Naive thymus-derived CD4-positive, alpha-beta T cell (primary cell): ENCODE measurements at regions of chr19 and their contacts with region 1.

Region 1: DNA sequence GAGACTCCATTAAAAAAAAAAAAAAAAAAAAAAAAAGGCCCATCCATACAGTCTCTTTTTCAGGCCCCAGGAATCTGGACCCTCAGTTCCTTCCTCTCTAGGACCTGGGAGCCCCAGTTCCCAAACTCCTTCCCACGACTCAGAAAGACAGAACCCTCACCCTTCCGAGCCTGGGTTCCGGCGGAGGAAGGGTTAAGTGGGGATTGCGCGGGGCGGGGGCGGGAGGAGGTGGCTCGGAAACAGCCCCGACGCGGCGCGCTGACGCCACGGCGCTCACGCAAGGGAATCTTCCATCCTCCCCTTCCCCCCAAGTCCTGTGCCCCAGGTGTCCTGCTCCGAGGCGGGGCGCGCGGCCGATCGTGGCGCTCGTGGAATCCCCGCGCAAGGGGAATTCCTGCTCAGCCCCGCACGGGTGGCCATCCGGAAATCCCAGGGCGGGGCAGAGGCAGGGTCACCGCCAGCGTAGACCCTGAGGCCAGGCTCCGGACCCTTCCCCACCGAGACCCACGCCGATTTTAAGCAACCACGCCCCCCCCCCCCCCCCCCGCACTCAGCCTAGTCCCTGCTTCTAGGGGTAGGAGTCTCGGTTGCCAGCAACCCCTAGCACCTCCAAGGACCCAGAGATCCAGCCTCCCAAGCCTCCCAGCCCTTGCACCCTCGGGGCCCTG is 659 bp downstream of the NFKBID start:
- DNase-seq: peak; percentile 74 to 94 (median 87)
- ATAC-seq: peak; percentile 74
- H3K4me3 ChIP-seq: peak overlapping the region; percentile 94
- H3K4me3 Mint-ChIP-seq: peak overlapping the region; percentile 83 to 100 (median 95)
- H3K27ac ChIP-seq: peak overlapping the region; percentile 100
- H3K27ac Mint-ChIP-seq: peak overlapping the region; percentile 92 to 97 (median 96)
- H3K4me1 ChIP-seq: peaks cover 35 to 43% of the 10 kb centered on the region in 2 donors
- H3K4me1 Mint-ChIP-seq: peaks cover 34 to 65% (median 46%) of the 10 kb centered on the region in 7 donors
- H3K27me3 ChIP-seq: no peaks in the 10 kb centered on the region
- H3K27me3 Mint-ChIP-seq: no peaks in the 10 kb centered on the region

Region 2: DNA sequence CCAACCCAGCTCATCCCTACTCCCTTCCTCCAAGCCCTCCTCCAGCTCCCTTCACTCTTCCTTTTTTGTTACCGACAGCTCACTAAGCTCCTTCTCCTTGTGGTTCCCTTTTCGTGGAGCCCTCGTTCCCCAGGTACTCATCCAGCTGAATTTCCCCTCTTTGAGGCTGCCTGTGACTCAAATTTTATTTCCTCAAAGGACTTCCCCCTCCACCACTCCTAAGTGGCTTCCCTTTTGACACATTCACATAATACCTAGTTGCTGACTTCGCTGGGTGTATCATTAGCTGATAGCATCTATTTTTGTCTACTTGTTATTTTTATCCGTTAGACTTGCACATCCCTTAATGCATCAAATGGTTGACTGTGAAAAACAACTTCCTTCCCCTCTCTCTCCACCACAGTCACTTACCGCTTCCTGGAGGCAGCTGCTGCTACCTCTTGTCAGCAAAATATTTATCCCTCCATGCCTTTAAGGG is 437.2 kb before region 1 on chr19:
- CTCF ChIA-PET with region 1: no interaction called
- POLR2A ChIA-PET with region 1: no interaction called
- intact Hi-C with region 1: no loop called
- DNase-seq: peak in 8 of 9 donors; percentile 32 to 88 (median 82)
- ATAC-seq: peak; percentile 95
- H3K4me3 ChIP-seq: peak overlapping the region; percentile 6
- H3K4me3 Mint-ChIP-seq: peak overlapping the region; percentile 25 to 87 (median 76)
- H3K27ac ChIP-seq: peak overlapping the region; percentile 22
- H3K27ac Mint-ChIP-seq: peak overlapping the region; percentile 75 to 98 (median 91)
- H3K4me1 ChIP-seq: peaks cover 14 to 29% of the 10 kb centered on the region in 2 donors
- H3K4me1 Mint-ChIP-seq: peaks cover 30 to 37% (median 35%) of the 10 kb centered on the region in 7 donors
- H3K27me3 ChIP-seq: no peaks in the 10 kb centered on the region
- H3K27me3 Mint-ChIP-seq: peaks cover 0 to 8% (median 0%) of the 10 kb centered on the region in 5 donors

Region 3: DNA sequence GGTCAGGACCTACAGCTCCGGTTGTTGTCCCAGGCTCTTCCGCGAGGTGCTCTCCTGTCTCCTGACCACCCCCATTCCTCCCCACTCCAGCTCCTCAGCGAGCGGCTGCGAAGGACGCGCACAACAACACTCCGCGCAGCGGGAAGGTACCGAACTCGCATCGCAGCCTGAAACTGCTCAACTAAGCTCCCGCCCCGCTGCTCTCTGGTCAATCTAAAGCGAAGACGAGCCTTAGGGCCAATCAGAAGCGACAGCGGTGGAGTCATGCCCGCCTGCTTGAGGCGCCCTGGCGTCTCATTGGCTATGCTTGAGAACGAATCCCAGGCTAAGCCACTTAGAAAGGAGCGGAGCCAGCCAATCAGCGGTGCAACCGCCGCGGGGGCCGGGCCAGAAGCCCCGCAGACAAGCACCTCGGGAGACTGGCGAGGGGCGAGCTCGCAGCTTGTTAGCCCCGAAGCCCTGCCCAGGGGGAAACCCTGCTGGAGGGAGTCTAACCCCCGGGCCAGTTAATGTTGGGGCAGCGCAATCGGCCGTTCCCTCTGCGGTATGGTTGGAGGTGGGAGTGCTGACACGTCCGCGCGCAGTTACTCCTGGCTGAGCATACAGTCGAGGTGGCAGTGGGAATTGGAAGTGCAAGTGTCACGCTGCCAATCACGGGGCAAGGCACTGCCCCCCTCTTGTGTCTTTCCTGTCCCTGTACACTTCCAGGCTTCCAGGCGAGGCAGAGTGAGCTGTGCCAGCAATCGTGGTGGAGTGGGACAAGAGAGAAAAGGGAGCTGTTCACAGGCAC is 197.3 kb before region 1 on chr19:
- CTCF ChIA-PET with region 1: no interaction called
- POLR2A ChIA-PET with region 1: no interaction called
- intact Hi-C with region 1: loop called in 1 of 2 experiments (anchors 1 kb)
- DNase-seq: peak; percentile 66 to 96 (median 90)
- ATAC-seq: peak; percentile 100
- H3K4me3 ChIP-seq: peak overlapping the region; percentile 85
- H3K4me3 Mint-ChIP-seq: peak overlapping the region; percentile 88 to 100 (median 96)
- H3K27ac ChIP-seq: peak overlapping the region; percentile 66
- H3K27ac Mint-ChIP-seq: peak overlapping the region; percentile 79 to 98 (median 93)
- H3K4me1 ChIP-seq: no peaks in the 10 kb centered on the region
- H3K4me1 Mint-ChIP-seq: peaks cover 5 to 22% (median 6%) of the 10 kb centered on the region in 7 donors
- H3K27me3 ChIP-seq: no peaks in the 10 kb centered on the region
- H3K27me3 Mint-ChIP-seq: peaks cover 0 to 4% (median 0%) of the 10 kb centered on the region in 5 donors

Region 4: DNA sequence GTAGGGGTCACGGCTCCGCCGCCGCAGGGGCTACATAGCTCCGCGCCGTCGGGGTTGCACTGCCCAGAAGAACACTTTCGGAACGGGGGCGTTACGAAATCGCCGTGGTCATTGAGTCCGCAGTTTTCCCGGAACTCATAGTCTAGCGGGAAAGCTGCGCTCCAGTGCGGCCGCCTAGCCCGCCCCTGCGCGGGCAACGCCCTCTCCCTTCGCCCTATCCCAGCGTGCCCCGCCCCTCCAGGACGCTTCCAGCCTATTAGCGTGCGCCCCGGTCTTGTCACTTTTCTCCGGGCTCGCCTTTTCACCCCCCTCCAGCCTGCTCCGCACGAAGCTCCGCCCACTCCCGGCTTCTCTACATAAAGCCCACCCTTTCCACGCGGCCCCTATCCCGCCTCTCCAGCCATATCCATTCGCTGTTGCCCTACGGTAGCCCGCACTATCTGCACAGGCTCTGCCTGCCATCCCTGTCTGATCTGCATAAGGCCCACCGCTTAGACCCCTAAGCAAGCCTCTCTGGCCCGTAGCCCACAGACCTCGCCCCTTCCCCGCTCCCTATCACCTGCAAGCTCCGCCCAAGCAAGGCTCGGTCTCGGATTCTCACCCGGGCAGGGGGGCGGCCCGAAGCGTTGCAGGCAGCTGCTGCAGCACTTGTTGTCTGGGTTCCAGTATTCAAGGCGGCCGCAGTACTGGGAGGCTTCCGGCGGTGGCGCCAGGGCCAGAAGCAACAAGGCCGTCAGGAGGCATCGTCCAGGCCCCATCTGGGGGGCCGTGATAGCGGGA is 159.1 kb before region 1 on chr19:
- CTCF ChIA-PET with region 1: no interaction called
- POLR2A ChIA-PET with region 1: interaction called, 3 read pairs
- intact Hi-C with region 1: loop called (anchors 1 kb)
- DNase-seq: peak; percentile 81 to 95 (median 92)
- ATAC-seq: peak; percentile 78
- H3K4me3 ChIP-seq: peak overlapping the region; percentile 89
- H3K4me3 Mint-ChIP-seq: peak overlapping the region; percentile 87 to 100 (median 92)
- H3K27ac ChIP-seq: peak overlapping the region; percentile 91
- H3K27ac Mint-ChIP-seq: peak overlapping the region; percentile 85 to 99 (median 96)
- H3K4me1 ChIP-seq: peaks cover 27% of the 10 kb centered on the region in 2 donors
- H3K4me1 Mint-ChIP-seq: peaks cover 25 to 67% (median 48%) of the 10 kb centered on the region in 7 donors
- H3K27me3 ChIP-seq: no peaks in the 10 kb centered on the region
- H3K27me3 Mint-ChIP-seq: peaks cover 0 to 2% (median 0%) of the 10 kb centered on the region in 5 donors

Region 5: GRCh38 chr19:35869327-35870123 is 30.2 kb before region 1 on chr19:
- CTCF ChIA-PET with region 1: no interaction called
- POLR2A ChIA-PET with region 1: interaction called, 5 read pairs
- intact Hi-C with region 1: loop called in 1 of 2 experiments (anchors 2 kb)
- DNase-seq: peak; percentile 55 to 88 (median 78)
- ATAC-seq: peak; percentile 95
- H3K4me3 ChIP-seq: no peak overlapping the region
- H3K4me3 Mint-ChIP-seq: peak overlapping the region; percentile 75 to 92 (median 82)
- H3K27ac ChIP-seq: no peak overlapping the region
- H3K27ac Mint-ChIP-seq: peak overlapping the region in 5 of 9 donors; percentile 12 to 68 (median 53)
- H3K4me1 ChIP-seq: peaks cover 16 to 18% of the 10 kb centered on the region in 2 donors
- H3K4me1 Mint-ChIP-seq: peaks cover 13 to 22% (median 17%) of the 10 kb centered on the region in 7 donors
- H3K27me3 ChIP-seq: peaks cover 5 to 7% of the 10 kb centered on the region in 2 donors
- H3K27me3 Mint-ChIP-seq: peaks cover 22 to 57% (median 42%) of the 10 kb centered on the region in 5 donors

Region 6: GRCh38 chr19:35882114-35882832 is 17.4 kb before region 1 on chr19:
- CTCF ChIA-PET with region 1: interaction called, 6 read pairs
- POLR2A ChIA-PET with region 1: interaction called, 6 read pairs
- intact Hi-C with region 1: loop called (anchors 1 kb)
- DNase-seq: peak in 7 of 9 donors; percentile 53 to 75 (median 71)
- ATAC-seq: peak; percentile 66
- H3K4me3 ChIP-seq: no peak overlapping the region
- H3K4me3 Mint-ChIP-seq: no peak overlapping the region
- H3K27ac ChIP-seq: no peak overlapping the region
- H3K27ac Mint-ChIP-seq: peak overlapping the region in 4 of 9 donors; percentile 42 to 55 (median 50)
- H3K4me1 ChIP-seq: peaks cover 4 to 9% of the 10 kb centered on the region in 2 donors
- H3K4me1 Mint-ChIP-seq: peaks cover 8 to 17% (median 11%) of the 10 kb centered on the region in 7 donors
- H3K27me3 ChIP-seq: peaks cover 4 to 6% of the 10 kb centered on the region in 2 donors
- H3K27me3 Mint-ChIP-seq: peaks cover 12 to 20% (median 18%) of the 10 kb centered on the region in 5 donors

Region 7: GRCh38 chr19:35963514-35963913 is 63.8 kb after region 1 on chr19:
- CTCF ChIA-PET with region 1: no interaction called
- POLR2A ChIA-PET with region 1: no interaction called
- intact Hi-C with region 1: loop called in 1 of 2 experiments (anchors 2 kb)
- DNase-seq: peak in 7 of 9 donors; percentile 26 to 57 (median 47)
- ATAC-seq: no peak
- H3K4me3 ChIP-seq: no peak overlapping the region
- H3K4me3 Mint-ChIP-seq: no peak overlapping the region
- H3K27ac ChIP-seq: no peak overlapping the region
- H3K27ac Mint-ChIP-seq: no peak overlapping the region
- H3K4me1 ChIP-seq: peaks cover 10 to 11% of the 10 kb centered on the region in 2 donors
- H3K4me1 Mint-ChIP-seq: peaks cover 0 to 15% (median 9%) of the 10 kb centered on the region in 7 donors
- H3K27me3 ChIP-seq: no peaks in the 10 kb centered on the region
- H3K27me3 Mint-ChIP-seq: peaks cover 0 to 30% (median 0%) of the 10 kb centered on the region in 5 donors

Region 8: GRCh38 chr19:36114763-36115452 is 215.2 kb after region 1 on chr19 and contains the start of gene POLR2I:
- CTCF ChIA-PET with region 1: no interaction called
- POLR2A ChIA-PET with region 1: no interaction called
- intact Hi-C with region 1: loop called (anchors 1 to 10 kb)
- DNase-seq: peak; percentile 95 to 100 (median 99)
- ATAC-seq: peak; percentile 92
- H3K4me3 ChIP-seq: peak within 1 kb of the TSS; percentile 97
- H3K4me3 Mint-ChIP-seq: peak within 1 kb of the TSS; percentile 89 to 98 (median 96)
- H3K27ac ChIP-seq: peak within 1 kb of the TSS; percentile 90
- H3K27ac Mint-ChIP-seq: peak within 1 kb of the TSS; percentile 97 to 99 (median 98)
- H3K4me1 ChIP-seq: peaks cover 14 to 15% of the 10 kb centered on the region in 2 donors
- H3K4me1 Mint-ChIP-seq: peaks cover 27 to 54% (median 42%) of the 10 kb centered on the region in 7 donors
- H3K27me3 ChIP-seq: no peaks in the 10 kb centered on the region
- H3K27me3 Mint-ChIP-seq: peaks cover 0 to 5% (median 0%) of the 10 kb centered on the region in 5 donors
- total RNA-seq, gene POLR2I: 20.9 to 56.7 (median 44.7) TPM